Activated B cell treated with CpG ODN at 0.5 μM for 24 hours (primary cell): ENCODE measurements at regions of chr1 and their contacts with region 1.

Region 1: GRCh38 chr1:229685149-229685548 is 59.1 kb downstream of the URB2 start:
- DNase-seq: no peak
- ATAC-seq: no peak
- H3K4me3 Mint-ChIP-seq: no peak overlapping the region
- H3K27ac Mint-ChIP-seq: no peak overlapping the region
- H3K4me1 Mint-ChIP-seq: no peaks in the 10 kb centered on the region
- H3K27me3 Mint-ChIP-seq: peaks cover 2% of the 10 kb centered on the region
- CTCF ChIP-seq: no peak

Region 2: DNA sequence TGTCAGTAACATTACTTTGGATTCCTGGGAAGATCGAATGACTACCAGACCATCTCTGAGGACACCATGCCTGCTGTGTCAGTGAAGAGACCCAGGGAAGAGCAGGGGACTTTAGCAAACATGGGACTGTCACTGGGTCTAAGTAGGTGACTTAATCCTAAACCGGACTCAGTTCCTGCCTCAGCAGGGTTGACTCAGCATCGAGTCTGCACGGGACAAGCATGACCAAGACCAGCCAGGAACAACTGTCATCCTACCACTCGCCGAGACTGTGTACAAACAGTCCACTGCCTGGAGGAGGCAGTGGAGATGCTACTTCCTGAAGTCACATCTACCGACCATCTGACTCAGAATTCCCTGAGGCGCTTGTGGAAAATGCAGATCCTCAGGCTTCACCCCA is 467.4 kb before region 1 on chr1:
- CTCF ChIA-PET with region 1: no interaction called
- POLR2A ChIA-PET with region 1: no interaction called
- intact Hi-C with region 1: no loop called
- DNase-seq: no peak
- ATAC-seq: no peak
- H3K4me3 Mint-ChIP-seq: no peak overlapping the region
- H3K27ac Mint-ChIP-seq: no peak overlapping the region
- H3K4me1 Mint-ChIP-seq: no peaks in the 10 kb centered on the region
- H3K27me3 Mint-ChIP-seq: peaks cover 14% of the 10 kb centered on the region
- CTCF ChIP-seq: no peak

Region 3: DNA sequence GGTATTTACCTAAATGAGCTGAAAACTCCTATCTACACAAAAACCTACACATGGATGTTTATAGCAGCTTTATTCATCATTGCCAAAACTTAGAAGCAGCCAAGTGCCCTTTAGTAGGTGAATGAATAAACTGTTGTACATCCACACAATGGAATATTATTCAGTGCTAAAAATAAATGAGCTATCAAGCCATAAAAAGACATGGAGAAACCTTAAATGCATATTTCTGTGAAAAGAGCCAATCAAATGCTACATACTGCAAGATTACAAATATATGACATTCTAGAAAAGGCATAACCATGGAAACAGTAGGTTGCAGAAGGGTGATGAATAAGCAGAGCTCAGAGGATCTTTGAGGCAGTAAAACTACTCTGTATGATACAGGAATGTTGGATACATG is 149.9 kb before region 1 on chr1:
- CTCF ChIA-PET with region 1: no interaction called
- POLR2A ChIA-PET with region 1: no interaction called
- intact Hi-C with region 1: no loop called
- DNase-seq: no peak
- ATAC-seq: no peak
- H3K4me3 Mint-ChIP-seq: no peak overlapping the region
- H3K27ac Mint-ChIP-seq: no peak overlapping the region
- H3K4me1 Mint-ChIP-seq: no peaks in the 10 kb centered on the region
- H3K27me3 Mint-ChIP-seq: no peaks in the 10 kb centered on the region
- CTCF ChIP-seq: no peak

Region 4: DNA sequence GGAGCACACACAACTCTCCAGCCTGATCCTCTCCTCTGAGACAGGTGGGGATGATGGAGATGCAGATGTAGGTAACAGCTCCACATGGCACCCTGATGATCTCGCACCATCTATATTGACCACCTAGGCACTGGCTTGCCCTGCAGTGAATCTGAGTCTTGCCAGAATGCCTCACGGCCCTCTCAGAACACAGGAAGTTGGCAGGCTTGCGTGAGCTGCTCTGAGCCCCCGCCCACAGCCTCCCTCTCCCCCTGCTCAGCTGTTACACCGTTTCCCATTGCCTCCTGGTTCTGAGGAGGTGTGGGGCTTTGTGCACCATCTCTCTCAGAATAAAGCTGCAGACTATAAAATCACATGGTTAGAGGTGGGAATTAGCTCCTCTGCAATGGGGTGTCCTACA is 11.1 kb before region 1 on chr1:
- CTCF ChIA-PET with region 1: interaction called, 4 read pairs
- POLR2A ChIA-PET with region 1: interaction called, 4 read pairs
- intact Hi-C with region 1: loop called (anchors 1 kb)
- DNase-seq: no peak
- ATAC-seq: no peak
- H3K4me3 Mint-ChIP-seq: no peak overlapping the region
- H3K27ac Mint-ChIP-seq: no peak overlapping the region
- H3K4me1 Mint-ChIP-seq: no peaks in the 10 kb centered on the region
- H3K27me3 Mint-ChIP-seq: no peaks in the 10 kb centered on the region
- CTCF ChIP-seq: no peak